AG04450 (cell line): ENCODE measurements at regions of chr7 and their contacts with region 1.

Region 1: DNA sequence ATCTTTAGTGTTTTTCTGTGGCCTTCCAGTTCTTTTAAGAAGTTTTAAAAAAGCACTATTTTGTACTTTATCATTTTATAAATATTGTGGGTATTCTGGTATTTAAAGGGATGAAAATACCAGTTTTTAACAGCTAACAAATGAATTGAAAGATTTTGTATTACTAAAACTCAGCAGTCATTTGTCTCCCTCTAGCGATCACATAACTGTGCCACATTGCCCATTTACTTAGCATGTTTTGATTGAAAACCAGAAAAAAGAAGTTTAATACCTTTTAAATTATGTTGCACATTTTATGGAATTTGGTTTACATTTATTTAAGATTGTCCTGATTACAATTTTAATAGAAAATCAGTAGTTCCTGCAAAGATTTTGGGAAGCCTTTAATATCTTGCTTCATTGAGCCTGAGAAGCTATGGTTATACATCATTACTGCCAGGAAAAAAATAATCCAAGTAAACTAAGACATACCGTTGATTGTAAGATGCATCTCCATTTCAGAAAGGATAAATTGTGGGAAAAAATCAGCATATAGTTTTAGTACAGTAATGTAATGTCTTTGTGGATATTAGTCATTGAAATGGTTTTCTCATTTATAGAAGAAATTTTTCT is 34.9 kb downstream of the TAX1BP1 start:
- DNase-seq: no peak
- H3K4me3 ChIP-seq: no peak overlapping the region
- H3K27ac ChIP-seq: no peak overlapping the region
- H3K27me3 ChIP-seq: no peaks in the 10 kb centered on the region
- CTCF ChIP-seq: peak; percentile 63

Region 2: GRCh38 chr7:27210441-27211083 is 564.3 kb before region 1 on chr7:
- CTCF ChIA-PET with region 1: interaction called, 13 read pairs
- POLR2A ChIA-PET with region 1: no interaction called
- DNase-seq: no peak
- H3K4me3 ChIP-seq: peak overlapping the region; percentile 37
- H3K27ac ChIP-seq: no peak overlapping the region
- H3K27me3 ChIP-seq: peaks cover 98% of the 10 kb centered on the region
- CTCF ChIP-seq: peak; percentile 81

Region 3: DNA sequence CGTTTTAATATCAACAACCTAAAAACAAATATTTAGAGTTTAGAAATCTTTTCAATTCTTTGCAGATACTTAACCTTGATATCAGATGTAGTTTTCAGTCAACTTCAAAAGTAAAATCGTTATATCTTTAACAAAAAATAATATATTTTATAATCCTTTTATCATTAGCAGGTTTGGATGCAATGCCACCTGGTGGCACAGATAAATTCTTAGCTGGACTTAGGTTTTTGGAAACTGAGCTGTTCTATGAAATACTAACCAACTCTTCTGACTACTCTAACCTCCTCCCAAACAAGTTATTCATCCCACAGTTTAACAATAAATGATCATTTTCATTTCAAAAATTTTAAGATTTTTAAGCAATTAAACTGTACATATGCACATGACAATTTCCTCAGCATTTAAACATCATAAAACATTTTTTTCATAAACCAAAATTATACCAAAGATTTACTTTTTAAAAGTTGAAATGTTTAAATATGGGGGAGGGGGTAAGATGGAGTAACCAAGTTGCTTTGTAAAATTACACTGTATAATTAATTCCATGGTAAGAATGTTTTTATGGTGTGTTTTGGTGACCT is 169.0 kb before region 1 on chr7:
- CTCF ChIA-PET with region 1: interaction called, 13 read pairs
- POLR2A ChIA-PET with region 1: no interaction called
- DNase-seq: no peak
- H3K4me3 ChIP-seq: no peak overlapping the region
- H3K27ac ChIP-seq: no peak overlapping the region
- H3K27me3 ChIP-seq: no peaks in the 10 kb centered on the region
- CTCF ChIP-seq: peak; percentile 57

Region 4: DNA sequence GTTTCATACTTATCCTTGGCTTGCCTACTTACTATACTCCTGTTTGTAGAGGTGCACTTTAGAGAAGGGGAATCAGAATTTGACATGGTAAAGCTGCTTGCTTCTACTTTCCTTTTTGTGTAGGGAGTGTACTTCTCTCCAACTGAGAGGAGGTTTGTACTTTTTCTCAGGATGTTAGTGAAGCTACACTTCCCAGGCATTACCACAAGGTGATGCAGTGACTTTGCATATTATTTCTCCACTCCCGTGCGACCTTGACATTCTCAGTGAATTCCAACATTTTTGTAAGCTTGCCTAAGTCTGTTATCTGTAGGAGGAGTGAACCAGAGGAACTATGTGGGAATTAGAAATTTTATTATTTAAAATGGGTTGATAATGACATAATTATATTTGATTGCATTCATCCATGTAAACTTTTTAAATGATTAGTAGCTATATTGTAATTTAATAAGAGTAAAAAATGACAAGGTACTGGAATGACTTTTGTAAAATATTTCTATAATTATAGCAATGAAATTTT is 29.7 kb before region 1 on chr7:
- CTCF ChIA-PET with region 1: interaction called, 14 read pairs
- POLR2A ChIA-PET with region 1: no interaction called
- DNase-seq: peak; percentile 51
- H3K4me3 ChIP-seq: peak overlapping the region; percentile 21; the same call in 1 of the 2 replicates
- H3K27ac ChIP-seq: peak overlapping the region; percentile 79
- H3K27me3 ChIP-seq: no peaks in the 10 kb centered on the region
- CTCF ChIP-seq: peak; percentile 80

Region 5: GRCh38 chr7:28020302-28020940 is 245.6 kb after region 1 on chr7:
- CTCF ChIA-PET with region 1: interaction called, 17 read pairs
- POLR2A ChIA-PET with region 1: no interaction called
- DNase-seq: peak; percentile 46
- H3K4me3 ChIP-seq: no peak overlapping the region
- H3K27ac ChIP-seq: no peak overlapping the region
- H3K27me3 ChIP-seq: no peaks in the 10 kb centered on the region
- CTCF ChIP-seq: peak; percentile 87